Ovary (tissue), 10 donors: ENCODE measurements at regions of chr19 and their contacts with region 1.

Region 1: DNA sequence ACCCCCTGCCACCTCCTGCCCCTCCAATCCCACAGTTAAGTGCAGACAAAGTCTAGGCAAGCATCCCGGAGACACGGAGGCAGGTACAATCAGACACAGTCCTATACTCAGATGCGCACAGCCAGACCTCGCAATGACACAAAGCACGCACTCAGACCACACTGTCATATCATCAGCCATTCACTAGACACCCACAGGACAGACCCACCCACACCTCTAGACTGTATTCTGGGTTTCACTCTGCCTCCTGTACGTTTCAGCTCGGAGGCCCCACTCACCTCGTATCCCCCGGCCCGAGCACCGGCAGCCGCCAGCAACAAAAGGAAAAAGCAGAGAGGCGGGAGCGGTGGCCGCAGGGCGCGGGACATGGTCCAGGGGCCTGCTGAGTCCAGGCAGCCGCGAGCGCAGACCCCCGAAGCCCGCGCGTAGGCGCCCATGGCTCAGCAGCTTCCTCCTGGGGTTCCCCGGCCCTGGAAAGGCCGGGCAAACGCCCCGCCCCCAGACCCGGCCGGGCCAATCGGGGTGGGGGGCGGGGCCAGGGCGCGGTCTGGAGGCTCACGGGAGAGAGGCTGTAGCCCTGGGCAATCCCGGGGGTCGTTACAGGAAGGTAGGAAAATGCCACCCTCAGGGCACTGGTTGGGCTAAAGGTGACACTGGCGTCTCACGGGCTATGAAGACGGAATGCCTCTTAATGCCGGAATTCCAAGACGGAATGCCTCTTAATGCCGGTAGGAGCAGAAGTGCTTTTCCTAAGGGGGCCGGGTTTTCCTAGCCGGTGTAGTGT is at the starts of genes MAN2B1 and WDR83:
- DNase-seq: peak; percentile 66 to 85 (median 73)
- H3K4me3 ChIP-seq: peak within 1 kb of the TSS; percentile 84
- H3K27ac ChIP-seq: peak within 1 kb of the TSS in 1 of 2 donors; percentile 16
- H3K4me1 ChIP-seq: peaks cover 12% of the 10 kb centered on the region
- H3K27me3 ChIP-seq: no peaks in the 10 kb centered on the region
- CTCF ChIP-seq: no peak
- EP300 ChIP-seq: no peak
- POLR2A ChIP-seq: no peak
- total RNA-seq, gene MAN2B1: 17.8 to 63.7 (median 49.8) TPM
- total RNA-seq, gene WDR83: 10.5 to 15.1 (median 11.9) TPM

Region 2: DNA sequence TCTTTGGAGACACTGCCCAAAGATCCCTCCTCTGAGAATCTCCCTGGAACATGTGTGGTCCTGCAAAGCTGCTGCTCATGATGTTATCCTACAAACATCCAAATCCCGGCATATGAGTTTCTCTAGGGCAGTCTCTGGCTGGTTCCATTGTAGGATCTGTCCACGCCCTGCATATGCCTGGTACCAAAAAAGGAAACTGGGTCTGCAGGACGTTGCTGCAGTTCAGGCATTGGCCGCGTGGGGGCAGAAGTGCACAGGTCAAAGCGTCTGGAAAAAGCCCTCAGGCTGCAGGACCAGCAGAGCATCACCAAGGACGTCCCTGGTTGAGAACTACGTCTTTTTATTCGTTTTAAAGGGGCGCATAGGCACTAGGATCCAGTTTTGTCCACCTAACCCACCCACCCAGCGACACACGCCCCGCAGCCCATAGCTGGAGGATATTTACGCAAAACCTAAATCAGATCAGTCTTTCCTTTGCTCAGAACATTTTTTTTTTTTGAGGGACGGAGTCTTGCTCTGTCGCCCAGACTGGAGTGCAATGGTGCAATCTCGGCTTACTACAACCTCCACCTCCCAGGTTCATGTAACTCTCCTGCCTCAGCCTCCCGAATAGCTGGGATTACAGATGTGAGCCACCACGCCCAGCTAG is 102.3 kb before region 1 on chr19:
- intact Hi-C with region 1: loop called in 1 of 4 experiments (anchors 10 kb)
- DNase-seq: peak; percentile 76 to 92 (median 87)
- H3K4me3 ChIP-seq: no peak overlapping the region
- H3K27ac ChIP-seq: no peak overlapping the region
- H3K4me1 ChIP-seq: no peaks in the 10 kb centered on the region
- H3K27me3 ChIP-seq: no peaks in the 10 kb centered on the region
- CTCF ChIP-seq: peak; percentile 71 to 86 (median 73)
- EP300 ChIP-seq: no peak
- POLR2A ChIP-seq: no peak

Region 3: DNA sequence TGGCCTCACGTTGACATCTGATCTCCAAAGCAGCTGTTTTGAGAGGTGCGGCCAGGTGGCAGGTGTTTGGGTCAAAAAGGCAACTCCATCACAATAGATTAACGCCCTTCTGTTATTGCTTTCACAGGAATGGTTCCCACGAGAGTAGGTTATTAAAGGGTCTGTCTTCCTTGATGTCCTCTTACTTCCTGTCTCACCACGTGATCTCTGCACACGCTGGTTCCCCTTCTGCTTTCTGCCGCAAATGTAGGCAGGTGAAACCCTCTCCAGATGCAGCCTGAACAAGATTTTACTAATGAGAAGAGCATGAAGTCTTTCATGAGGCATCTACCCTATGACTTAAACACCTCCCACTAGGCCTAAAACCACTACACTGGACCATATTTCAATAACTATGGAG is 92.4 kb before region 1 on chr19:
- intact Hi-C with region 1: loop called in 2 of 4 experiments (anchors 10 kb)
- DNase-seq: peak in 1 of 5 donors; percentile 1
- H3K4me3 ChIP-seq: no peak overlapping the region
- H3K27ac ChIP-seq: no peak overlapping the region
- H3K4me1 ChIP-seq: no peaks in the 10 kb centered on the region
- H3K27me3 ChIP-seq: no peaks in the 10 kb centered on the region
- CTCF ChIP-seq: no peak
- EP300 ChIP-seq: no peak
- POLR2A ChIP-seq: no peak

Region 4: GRCh38 chr19:12705654-12706331 is 39.3 kb after region 1 on chr19:
- intact Hi-C with region 1: no loop called
- DNase-seq: no peak
- H3K4me3 ChIP-seq: no peak overlapping the region
- H3K27ac ChIP-seq: no peak overlapping the region
- H3K4me1 ChIP-seq: no peaks in the 10 kb centered on the region
- H3K27me3 ChIP-seq: no peaks in the 10 kb centered on the region
- CTCF ChIP-seq: no peak
- EP300 ChIP-seq: no peak
- POLR2A ChIP-seq: no peak

Region 5: DNA sequence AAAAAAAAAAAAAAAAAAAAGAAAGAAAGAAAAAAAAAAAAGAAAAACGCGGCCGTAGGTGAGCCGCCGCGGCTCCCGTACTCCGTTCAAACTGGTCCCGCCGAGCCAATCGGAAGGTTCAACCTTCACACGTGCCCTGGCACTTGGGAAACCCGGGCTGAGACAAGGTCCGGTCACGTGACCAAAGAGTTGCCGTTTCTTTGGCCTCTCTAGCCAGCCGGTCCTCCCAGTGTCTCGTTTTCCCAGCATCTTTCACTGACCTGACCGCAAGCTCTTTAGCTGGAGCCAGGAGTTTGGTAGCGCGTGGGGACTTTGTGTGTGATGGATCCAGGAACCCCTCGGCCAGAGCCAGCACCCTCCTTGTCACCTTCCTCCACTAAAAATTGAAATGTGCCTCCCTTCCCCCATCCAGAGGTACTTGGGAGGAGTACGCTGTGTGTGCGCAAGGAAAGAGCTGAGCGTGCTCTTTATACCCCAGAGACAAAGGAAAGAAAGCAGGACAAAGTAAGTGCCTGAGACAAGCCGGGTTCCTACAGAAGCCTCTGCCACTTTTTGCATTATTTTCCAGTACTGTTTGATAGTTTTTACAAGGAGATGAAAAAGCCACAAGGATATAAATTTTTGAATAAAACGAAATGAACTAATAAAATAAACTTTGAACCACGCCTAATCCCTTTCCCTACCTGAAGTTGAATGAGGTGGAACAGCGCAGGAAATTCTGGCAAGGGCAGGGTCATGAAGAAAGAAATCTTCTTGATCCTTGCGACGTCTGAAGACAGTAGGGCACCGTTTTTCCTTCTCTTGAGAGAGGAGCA is 56.3 kb after region 1 on chr19:
- intact Hi-C with region 1: no loop called
- DNase-seq: peak; percentile 92 to 98 (median 96)
- H3K4me3 ChIP-seq: peak overlapping the region; percentile 78
- H3K27ac ChIP-seq: peak overlapping the region; percentile 91 to 99
- H3K4me1 ChIP-seq: peaks cover 8% of the 10 kb centered on the region
- H3K27me3 ChIP-seq: no peaks in the 10 kb centered on the region
- CTCF ChIP-seq: no peak
- EP300 ChIP-seq: no peak
- POLR2A ChIP-seq: peak; percentile 30

Region 6: DNA sequence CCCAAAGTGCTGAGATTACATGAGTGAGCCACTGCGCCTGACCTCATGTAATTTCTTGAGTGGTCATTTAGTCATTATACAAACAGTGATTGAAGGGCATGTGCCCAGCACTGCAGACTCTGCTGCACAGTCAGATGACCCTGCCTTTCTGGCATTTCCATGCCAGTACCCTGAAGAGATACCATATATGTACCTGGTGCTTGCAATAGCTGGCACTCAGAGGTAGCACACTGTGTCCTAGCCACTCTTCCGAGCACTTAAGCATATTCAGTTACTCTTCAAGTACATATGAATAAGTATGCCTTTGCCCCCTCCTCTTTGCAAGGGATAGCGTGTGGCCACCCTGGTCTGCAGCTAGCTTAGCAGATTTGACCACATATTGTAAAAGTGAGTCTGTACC is 468.2 kb after region 1 on chr19:
- intact Hi-C with region 1: no loop called
- DNase-seq: no peak
- H3K4me3 ChIP-seq: no peak overlapping the region
- H3K27ac ChIP-seq: no peak overlapping the region
- H3K4me1 ChIP-seq: no peaks in the 10 kb centered on the region
- H3K27me3 ChIP-seq: no peaks in the 10 kb centered on the region
- CTCF ChIP-seq: no peak
- EP300 ChIP-seq: no peak
- POLR2A ChIP-seq: no peak